ENCODE measurements at regions of chr2 and their contacts with region 1.

Region 1: GRCh38 chr2:179020156-179020750 is 29.7 kb downstream of the CCDC141 start:
- DNase-seq: peak; percentile 61
- H3K4me3 Mint-ChIP-seq: no peak overlapping the region
- H3K27ac Mint-ChIP-seq: no peak overlapping the region
- H3K4me1 Mint-ChIP-seq: peaks cover 23% of the 10 kb centered on the region
- H3K27me3 Mint-ChIP-seq: no peaks in the 10 kb centered on the region

Region 2: GRCh38 chr2:178891265-178891958 is 128.8 kb before region 1 on chr2:
- CTCF ChIA-PET with region 1: interaction called, 25 read pairs
- DNase-seq: peak; percentile 79
- H3K4me3 Mint-ChIP-seq: no peak overlapping the region
- H3K27ac Mint-ChIP-seq: no peak overlapping the region
- H3K4me1 Mint-ChIP-seq: no peaks in the 10 kb centered on the region
- H3K27me3 Mint-ChIP-seq: no peaks in the 10 kb centered on the region

Region 3: GRCh38 chr2:179031731-179032408 is 11.6 kb after region 1 on chr2:
- CTCF ChIA-PET with region 1: interaction called, 12 read pairs
- DNase-seq: peak; percentile 43
- H3K4me3 Mint-ChIP-seq: peak overlapping the region; percentile 70
- H3K27ac Mint-ChIP-seq: peak overlapping the region; percentile 99
- H3K4me1 Mint-ChIP-seq: peaks cover 34% of the 10 kb centered on the region
- H3K27me3 Mint-ChIP-seq: no peaks in the 10 kb centered on the region

Measured in activated naive CD4-positive, alpha-beta T cell treated with anti-CD3 and anti-CD28 coated beads, Interleukin-2, amount 10 ng/mL, durations not matched to agents 7 days and 5 days (primary cell).